ENCODE measurements at regions of chr17 and their contacts with region 1.

Region 1: DNA sequence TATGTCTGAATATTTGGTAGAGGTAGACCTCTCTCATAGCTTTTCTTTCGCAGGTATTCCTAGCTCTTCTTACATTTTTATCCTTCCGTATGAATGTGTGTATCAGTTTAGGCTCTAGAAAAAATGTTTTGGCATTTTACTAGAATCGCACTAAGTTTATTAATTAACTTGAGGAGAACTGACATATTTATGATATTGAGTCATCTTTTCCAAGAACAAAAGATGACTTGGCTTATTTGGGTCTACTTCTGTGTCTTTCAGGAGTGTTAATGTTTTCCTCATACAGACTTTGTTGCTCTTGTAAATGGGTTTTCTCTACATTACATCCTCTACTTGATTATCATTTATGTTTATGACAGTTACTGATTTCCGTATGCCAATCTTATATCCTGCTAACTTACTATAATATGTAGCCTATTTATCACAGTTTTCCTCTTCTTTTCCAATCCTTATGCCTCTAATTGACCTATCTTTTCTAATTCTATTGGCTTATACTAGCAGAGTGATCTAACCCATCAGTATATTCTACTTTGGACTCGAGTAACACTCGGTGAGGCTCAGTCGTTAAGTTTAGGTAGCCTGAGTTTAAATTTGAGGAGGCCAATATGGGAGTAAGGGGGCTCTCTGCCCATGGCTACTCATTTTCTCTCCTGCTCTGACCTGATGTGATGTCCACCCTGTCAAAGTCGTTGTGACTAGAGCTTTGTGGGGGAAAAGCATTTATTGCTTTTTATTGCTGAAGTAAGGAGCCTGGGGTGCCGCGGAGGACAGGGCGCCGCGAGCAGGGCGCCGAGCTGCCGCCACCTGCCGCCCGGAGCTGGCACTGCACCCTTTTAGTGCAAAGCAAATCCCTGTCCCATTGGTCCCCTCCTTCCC is 20.0 kb downstream of the ST6GALNAC1 start:
- DNase-seq: peak; percentile 87
- ATAC-seq: peak; percentile 96
- H3K4me3 Mint-ChIP-seq: no peak overlapping the region
- H3K27ac Mint-ChIP-seq: no peak overlapping the region
- H3K4me1 Mint-ChIP-seq: peaks cover 7% of the 10 kb centered on the region
- H3K27me3 Mint-ChIP-seq: peaks cover 7% of the 10 kb centered on the region

Region 2: DNA sequence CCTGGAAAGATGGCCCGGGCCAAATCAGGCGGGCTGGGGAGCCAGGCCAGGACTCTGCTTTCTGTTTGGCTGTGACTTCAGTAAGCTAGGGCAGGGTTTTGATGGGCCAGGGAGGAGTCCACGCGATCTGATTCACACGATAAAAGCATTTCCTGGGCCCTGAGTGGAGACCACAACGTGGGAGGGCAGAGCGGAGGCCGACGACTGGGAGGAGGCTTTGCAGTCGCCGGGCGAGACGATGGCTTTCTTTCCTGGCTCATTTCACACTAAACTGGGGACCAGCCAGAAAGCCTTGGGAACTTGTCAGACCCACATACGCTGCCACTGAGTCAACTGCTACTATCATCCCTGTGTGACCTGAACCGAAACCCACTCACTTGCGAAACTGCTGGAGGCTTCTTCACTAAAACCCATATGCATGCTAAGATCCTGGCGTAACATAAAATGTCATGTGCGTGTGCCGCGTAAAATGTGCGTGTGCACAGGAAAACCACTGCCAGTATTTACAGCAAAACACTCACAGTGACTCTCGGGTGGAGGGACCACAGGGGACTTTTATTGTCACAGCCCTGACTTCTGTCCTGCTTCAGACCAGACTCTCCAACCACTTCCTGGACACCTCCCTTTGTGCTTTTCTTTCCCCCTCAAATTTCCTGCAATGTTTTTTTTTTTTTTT is 108.1 kb before region 1 on chr17:
- CTCF ChIA-PET with region 1: interaction called, 12 read pairs
- POLR2A ChIA-PET with region 1: no interaction called
- intact Hi-C with region 1: no loop called
- DNase-seq: peak; percentile 86
- ATAC-seq: peak; percentile 90
- H3K4me3 Mint-ChIP-seq: peak overlapping the region; percentile 47
- H3K27ac Mint-ChIP-seq: peak overlapping the region; percentile 94
- H3K4me1 Mint-ChIP-seq: peaks cover 32% of the 10 kb centered on the region
- H3K27me3 Mint-ChIP-seq: no peaks in the 10 kb centered on the region

Region 3: DNA sequence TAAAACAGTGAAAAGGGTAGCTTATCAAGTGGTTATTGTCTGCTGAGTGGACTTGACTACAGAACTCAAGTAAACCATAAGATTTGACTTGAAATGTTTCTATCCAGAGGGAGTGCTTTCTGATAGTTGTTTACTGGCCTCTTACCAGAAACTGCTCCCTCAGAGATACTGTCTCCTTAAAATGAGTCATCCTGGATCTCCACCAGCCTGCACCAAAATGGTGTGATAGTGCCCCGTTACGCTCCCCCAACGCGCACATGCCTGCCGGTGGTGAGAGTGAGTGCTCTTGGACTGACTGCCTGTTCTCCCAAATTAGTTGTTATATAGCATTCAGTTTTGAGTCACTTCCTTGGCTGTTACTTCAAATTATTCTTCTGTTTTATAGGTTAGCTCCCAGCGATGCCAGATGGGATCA is 60.8 kb before region 1 on chr17:
- CTCF ChIA-PET with region 1: interaction called, 10 read pairs
- POLR2A ChIA-PET with region 1: interaction called, 12 read pairs
- intact Hi-C with region 1: loop called (anchors 1 to 10 kb)
- DNase-seq: peak; percentile 55
- ATAC-seq: peak; percentile 31
- H3K4me3 Mint-ChIP-seq: no peak overlapping the region
- H3K27ac Mint-ChIP-seq: peak overlapping the region; percentile 38
- H3K4me1 Mint-ChIP-seq: peaks cover 54% of the 10 kb centered on the region
- H3K27me3 Mint-ChIP-seq: no peaks in the 10 kb centered on the region

Region 4: GRCh38 chr17:76585818-76586593 is 37.5 kb before region 1 on chr17 and contains the start of gene ST6GALNAC2:
- CTCF ChIA-PET with region 1: interaction called, 11 read pairs
- POLR2A ChIA-PET with region 1: no interaction called
- intact Hi-C with region 1: loop called in 1 of 2 experiments (anchors 5 kb)
- DNase-seq: peak; percentile 64
- ATAC-seq: peak; percentile 71
- H3K4me3 Mint-ChIP-seq: peak within 1 kb of the TSS; percentile 52
- H3K27ac Mint-ChIP-seq: no peak within 1 kb of the TSS
- H3K4me1 Mint-ChIP-seq: peaks cover 6% of the 10 kb centered on the region
- H3K27me3 Mint-ChIP-seq: peaks cover 37% of the 10 kb centered on the region
- total RNA-seq, gene ST6GALNAC2: 0.32 TPM in 1 of 2 experiments, not detected in the other

Region 5: GRCh38 chr17:76635659-76636360 is 12.3 kb after region 1 on chr17:
- CTCF ChIA-PET with region 1: interaction called, 21 read pairs
- POLR2A ChIA-PET with region 1: no interaction called
- intact Hi-C with region 1: no loop called
- DNase-seq: no peak
- ATAC-seq: peak; percentile 42
- H3K4me3 Mint-ChIP-seq: no peak overlapping the region
- H3K27ac Mint-ChIP-seq: no peak overlapping the region
- H3K4me1 Mint-ChIP-seq: no peaks in the 10 kb centered on the region
- H3K27me3 Mint-ChIP-seq: no peaks in the 10 kb centered on the region

Region 6: DNA sequence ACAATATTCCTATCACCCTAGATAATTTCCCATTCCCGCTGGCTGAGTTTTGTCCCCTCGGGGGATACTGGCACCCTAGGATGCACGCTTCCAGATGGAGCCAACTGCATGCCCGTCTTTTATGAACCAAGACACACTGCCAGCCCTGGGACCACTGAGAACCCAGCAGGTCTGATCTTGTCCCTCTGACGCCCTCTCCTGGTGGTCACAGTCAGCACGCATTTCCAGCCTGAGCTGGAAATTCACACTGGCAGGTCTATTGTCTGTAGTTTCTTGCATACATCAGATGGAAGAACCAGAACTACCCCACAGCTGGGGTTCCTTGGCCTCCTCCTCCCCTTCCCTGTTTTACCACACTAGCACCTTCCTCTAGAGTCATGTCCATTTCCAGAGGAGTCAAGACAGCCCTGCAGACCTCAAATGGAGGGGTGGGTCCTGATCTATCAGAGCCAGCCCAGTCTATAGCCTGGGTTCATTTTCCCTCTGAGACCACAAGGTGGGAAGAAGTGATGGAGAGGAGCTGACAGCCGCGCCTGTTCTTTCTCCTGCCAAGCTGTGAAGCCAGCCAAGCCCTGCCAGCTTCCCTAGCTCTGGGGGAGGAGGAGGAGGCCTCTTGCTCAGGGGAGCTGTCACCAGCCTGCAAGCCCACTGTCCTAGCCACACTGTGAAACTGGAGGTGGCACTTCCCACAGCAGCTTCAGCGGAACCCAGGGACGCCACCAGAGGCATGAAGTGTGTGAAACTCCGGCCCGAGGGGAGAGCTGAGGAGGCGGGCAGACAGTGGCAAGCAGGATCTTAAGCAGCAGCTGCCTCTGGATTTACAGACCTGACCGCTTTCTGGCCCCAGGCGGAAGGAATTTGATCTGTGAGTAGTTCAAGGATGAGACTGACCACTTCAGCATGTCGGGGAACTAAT is 58.0 kb after region 1 on chr17:
- CTCF ChIA-PET with region 1: interaction called, 15 read pairs
- POLR2A ChIA-PET with region 1: no interaction called
- intact Hi-C with region 1: no loop called
- DNase-seq: peak; percentile 83
- ATAC-seq: peak; percentile 89
- H3K4me3 Mint-ChIP-seq: no peak overlapping the region
- H3K27ac Mint-ChIP-seq: no peak overlapping the region
- H3K4me1 Mint-ChIP-seq: peaks cover 1% of the 10 kb centered on the region
- H3K27me3 Mint-ChIP-seq: no peaks in the 10 kb centered on the region

Measured in activated CD4-positive, alpha-beta T cell treated with anti-CD3 and anti-CD28 coated beads for 36 hours (primary cell).